ENCODE measurements at regions of chr7 and their contacts with region 1.

Region 1: GRCh38 chr7:4775250-4775847 is at the start of gene AP5Z1:
- DNase-seq: peak; percentile 97
- ATAC-seq: peak; percentile 93
- H3K4me3 Mint-ChIP-seq: peak within 1 kb of the TSS; percentile 99
- H3K27ac Mint-ChIP-seq: peak within 1 kb of the TSS; percentile 99
- H3K4me1 Mint-ChIP-seq: peaks cover 37% of the 10 kb centered on the region
- H3K27me3 Mint-ChIP-seq: no peaks in the 10 kb centered on the region
- total RNA-seq, gene AP5Z1: 47.3 to 55.0 TPM

Region 2: DNA sequence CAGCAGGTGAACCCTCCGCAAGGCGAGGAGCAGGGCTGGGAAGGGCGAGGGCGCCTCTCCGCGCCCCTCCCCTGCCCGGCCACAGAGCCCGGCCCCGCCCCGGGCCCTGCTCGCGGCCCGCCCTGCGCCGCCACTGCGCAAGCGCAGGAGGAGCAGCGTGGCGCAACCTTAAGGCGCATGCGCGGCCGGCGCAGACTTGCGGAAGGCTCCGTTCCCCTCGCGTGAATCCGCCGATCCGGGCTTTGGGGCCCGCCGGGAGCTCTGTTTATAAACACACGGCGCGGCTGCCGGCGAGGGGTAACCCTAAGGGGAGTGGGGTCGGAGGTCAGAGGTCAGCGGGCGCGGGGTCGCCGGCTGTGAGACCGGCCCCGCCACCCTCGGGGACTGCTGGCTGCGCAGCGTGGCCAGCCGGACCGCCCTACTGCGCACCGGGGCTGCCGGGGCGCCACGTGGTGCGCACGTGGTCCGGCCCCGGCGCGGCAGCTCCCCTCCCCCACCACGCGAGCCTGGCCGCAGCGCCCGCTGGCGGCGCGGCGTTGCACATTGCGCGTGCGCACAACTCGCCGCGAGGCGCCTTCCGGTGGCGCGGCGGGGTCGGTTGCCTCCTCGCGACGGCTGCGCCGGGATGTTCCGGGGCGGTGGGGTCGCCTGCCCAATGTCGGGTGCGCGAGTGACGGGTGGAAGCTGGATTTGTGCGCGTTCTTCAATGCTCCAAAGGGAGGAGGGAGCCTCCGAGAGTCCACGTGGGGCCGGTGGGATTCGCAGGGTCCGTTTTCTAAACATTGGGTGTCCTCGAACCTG is 133.5 kb before region 1 on chr7:
- CTCF ChIA-PET with region 1: no interaction called
- POLR2A ChIA-PET with region 1: interaction called, 33 read pairs
- DNase-seq: peak; percentile 96
- ATAC-seq: peak; percentile 84
- H3K4me3 Mint-ChIP-seq: peak overlapping the region; percentile 92
- H3K27ac Mint-ChIP-seq: peak overlapping the region; percentile 96
- H3K4me1 Mint-ChIP-seq: peaks cover 19% of the 10 kb centered on the region
- H3K27me3 Mint-ChIP-seq: no peaks in the 10 kb centered on the region

Region 3: GRCh38 chr7:4681886-4682620 is 93.3 kb before region 1 on chr7 and contains the start of gene FOXK1:
- CTCF ChIA-PET with region 1: interaction called, 3 read pairs
- POLR2A ChIA-PET with region 1: interaction called, 17 read pairs
- DNase-seq: peak; percentile 80
- ATAC-seq: peak; percentile 81
- H3K4me3 Mint-ChIP-seq: peak within 1 kb of the TSS; percentile 80
- H3K27ac Mint-ChIP-seq: peak within 1 kb of the TSS; percentile 88
- H3K4me1 Mint-ChIP-seq: peaks cover 26% of the 10 kb centered on the region
- H3K27me3 Mint-ChIP-seq: no peaks in the 10 kb centered on the region
- total RNA-seq, gene FOXK1: 26.8 to 28.5 TPM

Region 4: DNA sequence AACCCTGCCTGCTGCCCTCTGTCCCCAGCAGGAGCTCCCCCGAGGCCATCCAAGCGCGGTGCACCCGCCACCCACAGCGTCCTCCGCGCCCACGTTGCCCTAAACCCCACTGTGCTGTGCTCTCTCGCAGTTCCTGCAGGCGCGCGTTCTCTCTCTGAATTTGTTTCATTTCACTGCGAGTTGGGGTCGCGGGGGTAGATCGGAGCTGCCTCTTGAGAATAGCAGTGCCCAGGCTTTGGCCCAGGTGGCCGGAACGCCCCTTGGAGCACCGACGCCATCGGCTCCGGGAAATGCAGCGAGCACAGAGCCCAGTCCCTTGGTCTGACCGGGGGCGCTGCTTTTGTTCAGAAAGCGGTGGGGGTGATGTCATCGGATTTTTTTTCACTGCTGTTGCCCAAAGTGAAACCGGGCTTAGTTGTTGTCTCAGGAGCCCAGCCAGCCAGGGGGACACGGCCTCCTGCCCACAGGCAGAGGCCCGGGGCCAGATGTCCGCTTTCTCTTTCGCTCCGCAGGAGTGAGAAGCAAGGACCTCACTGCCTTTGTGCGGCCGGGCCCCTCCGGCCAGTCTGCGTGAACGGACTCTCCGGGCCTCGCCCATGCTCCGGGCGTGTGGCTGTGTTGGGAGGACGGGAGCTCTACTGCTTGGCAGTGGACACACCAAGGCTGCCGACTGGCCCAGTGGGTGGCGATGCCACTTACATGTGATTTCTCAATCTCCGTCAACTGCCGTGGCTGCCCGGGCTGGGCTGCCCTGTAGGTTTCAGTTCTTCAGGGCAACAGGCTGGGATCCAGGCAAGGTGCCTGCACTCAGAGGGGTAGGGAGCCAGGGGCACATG is 50.1 kb before region 1 on chr7:
- CTCF ChIA-PET with region 1: interaction called, 5 read pairs
- POLR2A ChIA-PET with region 1: interaction called, 19 read pairs
- DNase-seq: peak; percentile 83
- ATAC-seq: peak; percentile 86
- H3K4me3 Mint-ChIP-seq: peak overlapping the region; percentile 92
- H3K27ac Mint-ChIP-seq: peak overlapping the region; percentile 96
- H3K4me1 Mint-ChIP-seq: peaks cover 49% of the 10 kb centered on the region
- H3K27me3 Mint-ChIP-seq: no peaks in the 10 kb centered on the region

Region 5: GRCh38 chr7:4744391-4745264 is 30.7 kb before region 1 on chr7:
- CTCF ChIA-PET with region 1: interaction called, 3 read pairs
- POLR2A ChIA-PET with region 1: interaction called, 24 read pairs
- DNase-seq: peak; percentile 76
- ATAC-seq: peak; percentile 78
- H3K4me3 Mint-ChIP-seq: peak overlapping the region; percentile 82
- H3K27ac Mint-ChIP-seq: peak overlapping the region; percentile 95
- H3K4me1 Mint-ChIP-seq: peaks cover 60% of the 10 kb centered on the region
- H3K27me3 Mint-ChIP-seq: no peaks in the 10 kb centered on the region

Region 6: GRCh38 chr7:4791738-4792536 is 16.6 kb after region 1 on chr7:
- CTCF ChIA-PET with region 1: interaction called, 10 read pairs
- POLR2A ChIA-PET with region 1: interaction called, 9 read pairs
- DNase-seq: peak; percentile 67
- ATAC-seq: peak; percentile 57
- H3K4me3 Mint-ChIP-seq: no peak overlapping the region
- H3K27ac Mint-ChIP-seq: no peak overlapping the region
- H3K4me1 Mint-ChIP-seq: no peaks in the 10 kb centered on the region
- H3K27me3 Mint-ChIP-seq: no peaks in the 10 kb centered on the region

Region 7: GRCh38 chr7:4861673-4862072 is 86.3 kb after region 1 on chr7 and contains the start of gene PAPOLB:
- CTCF ChIA-PET with region 1: no interaction called
- POLR2A ChIA-PET with region 1: no interaction called
- DNase-seq: peak; percentile 56
- ATAC-seq: peak; percentile 76
- H3K4me3 Mint-ChIP-seq: peak within 1 kb of the TSS; percentile 48
- H3K27ac Mint-ChIP-seq: peak within 1 kb of the TSS; percentile 12
- H3K4me1 Mint-ChIP-seq: peaks cover 7% of the 10 kb centered on the region
- H3K27me3 Mint-ChIP-seq: peaks cover 64% of the 10 kb centered on the region
- total RNA-seq, gene PAPOLB: 0.08 TPM in 1 of 2 experiments, not detected in the other